PC-3 (cell line): ENCODE measurements at regions of chr6 and their contacts with region 1.

Region 1: GRCh38 chr6:102853269-102853955 is 1459.9 kb downstream of the GRIK2 start:
- DNase-seq: peak; percentile 39
- ATAC-seq: peak; percentile 66
- H3K4me3 ChIP-seq: no peak overlapping the region
- H3K27ac ChIP-seq: no peak overlapping the region
- H3K4me1 ChIP-seq: peaks cover 12% of the 10 kb centered on the region
- H3K27me3 ChIP-seq: no peaks in the 10 kb centered on the region
- CTCF ChIP-seq: no peak

Region 2: GRCh38 chr6:102907181-102907580 is 53.8 kb after region 1 on chr6:
- CTCF ChIA-PET with region 1: no interaction called
- POLR2A ChIA-PET with region 1: no interaction called
- intact Hi-C with region 1: no loop called
- DNase-seq: no peak
- ATAC-seq: no peak
- H3K4me3 ChIP-seq: no peak overlapping the region
- H3K27ac ChIP-seq: no peak overlapping the region
- H3K4me1 ChIP-seq: no peaks in the 10 kb centered on the region
- H3K27me3 ChIP-seq: no peaks in the 10 kb centered on the region
- CTCF ChIP-seq: no peak

Region 3: DNA sequence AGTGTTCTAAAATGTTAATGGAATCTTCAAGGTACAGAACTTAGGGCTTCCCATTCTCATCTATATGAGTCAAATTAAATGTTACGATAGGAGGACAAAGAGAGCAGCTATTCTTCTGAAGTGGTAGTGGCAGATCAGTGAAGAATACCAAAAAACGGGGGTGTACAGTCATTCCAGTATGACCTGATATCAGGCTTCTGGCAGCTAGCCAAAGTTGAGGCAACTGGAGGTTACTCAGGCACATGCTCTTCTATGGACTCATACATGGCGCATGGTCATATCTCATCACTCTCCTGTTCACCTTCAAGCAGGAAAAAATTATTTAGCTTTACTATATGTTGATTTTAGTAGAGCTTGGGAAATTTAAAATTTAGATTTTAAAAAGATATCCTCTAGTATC is 148.9 kb after region 1 on chr6:
- CTCF ChIA-PET with region 1: no interaction called
- POLR2A ChIA-PET with region 1: no interaction called
- intact Hi-C with region 1: loop called (anchors 5 kb)
- DNase-seq: peak; percentile 2
- ATAC-seq: peak; percentile 21; the same call in 1 of the 2 replicates
- H3K4me3 ChIP-seq: no peak overlapping the region
- H3K27ac ChIP-seq: no peak overlapping the region
- H3K4me1 ChIP-seq: peaks cover 12% of the 10 kb centered on the region; the same call in 1 of the 2 replicates
- H3K27me3 ChIP-seq: no peaks in the 10 kb centered on the region
- CTCF ChIP-seq: no peak

Region 4: GRCh38 chr6:103107985-103108384 is 254.6 kb after region 1 on chr6:
- CTCF ChIA-PET with region 1: no interaction called
- POLR2A ChIA-PET with region 1: no interaction called
- intact Hi-C with region 1: no loop called
- DNase-seq: no peak
- ATAC-seq: no peak
- H3K4me3 ChIP-seq: no peak overlapping the region
- H3K27ac ChIP-seq: no peak overlapping the region
- H3K4me1 ChIP-seq: no peaks in the 10 kb centered on the region
- H3K27me3 ChIP-seq: no peaks in the 10 kb centered on the region
- CTCF ChIP-seq: no peak

Region 5: DNA sequence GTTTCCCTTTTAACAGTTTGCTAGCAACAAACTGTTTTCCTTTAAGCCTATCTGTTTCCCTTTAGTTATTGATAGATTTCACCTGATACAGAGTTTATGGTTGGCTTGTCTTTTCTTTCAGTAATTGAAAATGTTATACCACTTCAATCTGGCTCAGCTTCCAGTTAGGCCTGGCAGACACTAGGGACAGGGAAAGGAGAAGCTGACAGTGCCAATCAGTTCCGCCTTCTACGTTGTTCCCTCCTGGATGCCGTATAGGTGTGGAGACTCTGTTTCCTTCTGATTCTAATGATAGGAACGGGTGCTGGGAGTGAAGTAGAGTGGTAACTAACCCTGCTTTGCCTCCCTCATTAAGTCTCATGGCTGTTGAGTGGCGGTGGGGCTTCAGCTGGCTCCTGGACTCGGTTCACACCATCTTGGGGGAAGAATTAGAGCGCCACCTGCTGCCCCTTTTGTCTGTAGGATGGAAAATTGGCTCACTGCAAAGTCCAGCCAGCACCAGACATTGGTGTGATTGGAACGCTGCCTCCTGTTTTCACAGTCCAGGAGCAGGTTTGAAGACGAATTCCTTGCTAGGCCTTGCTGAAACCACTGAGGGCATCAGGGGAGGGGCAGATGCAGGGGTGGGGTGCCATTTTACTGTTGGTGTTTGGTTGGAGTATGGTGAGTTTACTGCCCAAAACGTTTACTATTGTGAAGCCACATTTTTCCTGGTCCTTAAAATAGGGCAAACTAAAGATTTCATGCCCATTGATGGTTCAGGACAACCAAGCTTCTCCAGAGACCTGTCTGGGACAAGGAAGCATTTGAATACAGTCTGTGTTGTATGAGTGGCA is 269.6 kb after region 1 on chr6:
- CTCF ChIA-PET with region 1: interaction called, 6 read pairs
- POLR2A ChIA-PET with region 1: no interaction called
- intact Hi-C with region 1: loop called (anchors 1 kb)
- DNase-seq: peak; percentile 62
- ATAC-seq: peak; percentile 80
- H3K4me3 ChIP-seq: no peak overlapping the region
- H3K27ac ChIP-seq: no peak overlapping the region
- H3K4me1 ChIP-seq: no peaks in the 10 kb centered on the region
- H3K27me3 ChIP-seq: no peaks in the 10 kb centered on the region
- CTCF ChIP-seq: peak; percentile 76

Region 6: DNA sequence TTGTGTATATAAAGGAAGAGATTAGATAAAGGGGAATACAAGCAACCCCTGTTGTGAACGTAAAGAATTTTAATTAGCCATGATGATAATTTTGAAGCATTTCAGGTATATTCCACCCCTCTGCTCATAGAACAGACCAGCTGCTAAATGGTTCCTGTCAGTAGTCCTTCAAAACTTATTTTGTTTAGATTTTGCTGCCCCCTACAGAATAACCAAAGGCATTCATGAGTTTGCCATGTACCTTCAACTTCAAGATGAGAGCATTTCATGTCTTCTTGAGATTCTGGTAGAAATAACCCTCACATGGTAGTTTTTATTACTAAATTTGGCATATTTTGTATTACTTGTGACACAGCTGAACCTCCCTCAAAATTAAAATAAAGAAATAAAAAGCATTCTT is 419.6 kb after region 1 on chr6:
- CTCF ChIA-PET with region 1: no interaction called
- POLR2A ChIA-PET with region 1: no interaction called
- intact Hi-C with region 1: loop called (anchors 1 kb)
- DNase-seq: peak; percentile 52
- ATAC-seq: peak; percentile 69
- H3K4me3 ChIP-seq: no peak overlapping the region
- H3K27ac ChIP-seq: no peak overlapping the region
- H3K4me1 ChIP-seq: no peaks in the 10 kb centered on the region
- H3K27me3 ChIP-seq: no peaks in the 10 kb centered on the region
- CTCF ChIP-seq: peak; percentile 56

Region 7: GRCh38 chr6:103797738-103798137 is 944.3 kb after region 1 on chr6:
- CTCF ChIA-PET with region 1: no interaction called
- POLR2A ChIA-PET with region 1: no interaction called
- intact Hi-C with region 1: loop called (anchors 5 kb)
- DNase-seq: peak; percentile 30
- ATAC-seq: no peak
- H3K4me3 ChIP-seq: no peak overlapping the region
- H3K27ac ChIP-seq: no peak overlapping the region
- H3K4me1 ChIP-seq: no peaks in the 10 kb centered on the region
- H3K27me3 ChIP-seq: no peaks in the 10 kb centered on the region
- CTCF ChIP-seq: peak; percentile 56